Activated CD4-positive, alpha-beta memory T cell treated with anti-CD3 and anti-CD28 coated beads, Interleukin-2, amount 10 ng/mL, durations not matched to agents 7 days and 5 days (primary cell): ENCODE measurements at regions of chr1 and their contacts with region 1.

Region 1: GRCh38 chr1:41739061-41739955 is 179.4 kb downstream of the HIVEP3 start:
- DNase-seq: peak; percentile 82
- H3K4me3 Mint-ChIP-seq: peak overlapping the region; percentile 68
- H3K27ac Mint-ChIP-seq: peak overlapping the region; percentile 93
- H3K4me1 Mint-ChIP-seq: peaks cover 77% of the 10 kb centered on the region
- H3K27me3 Mint-ChIP-seq: no peaks in the 10 kb centered on the region

Region 2: GRCh38 chr1:41662061-41662764 is 77.1 kb before region 1 on chr1:
- CTCF ChIA-PET with region 1: no interaction called
- POLR2A ChIA-PET with region 1: interaction called, 11 read pairs
- DNase-seq: peak; percentile 84
- H3K4me3 Mint-ChIP-seq: peak overlapping the region; percentile 66
- H3K27ac Mint-ChIP-seq: peak overlapping the region; percentile 74
- H3K4me1 Mint-ChIP-seq: peaks cover 83% of the 10 kb centered on the region
- H3K27me3 Mint-ChIP-seq: no peaks in the 10 kb centered on the region

Region 3: GRCh38 chr1:41683681-41684500 is 55.4 kb before region 1 on chr1:
- CTCF ChIA-PET with region 1: no interaction called
- POLR2A ChIA-PET with region 1: interaction called, 15 read pairs
- DNase-seq: peak; percentile 71
- H3K4me3 Mint-ChIP-seq: peak overlapping the region; percentile 11
- H3K27ac Mint-ChIP-seq: peak overlapping the region; percentile 87
- H3K4me1 Mint-ChIP-seq: peaks cover 98% of the 10 kb centered on the region
- H3K27me3 Mint-ChIP-seq: no peaks in the 10 kb centered on the region

Region 4: GRCh38 chr1:41704196-41704595 is 35.1 kb before region 1 on chr1:
- CTCF ChIA-PET with region 1: no interaction called
- POLR2A ChIA-PET with region 1: no interaction called
- DNase-seq: no peak
- H3K4me3 Mint-ChIP-seq: no peak overlapping the region
- H3K27ac Mint-ChIP-seq: no peak overlapping the region
- H3K4me1 Mint-ChIP-seq: peaks cover 16% of the 10 kb centered on the region
- H3K27me3 Mint-ChIP-seq: no peaks in the 10 kb centered on the region

Region 5: DNA sequence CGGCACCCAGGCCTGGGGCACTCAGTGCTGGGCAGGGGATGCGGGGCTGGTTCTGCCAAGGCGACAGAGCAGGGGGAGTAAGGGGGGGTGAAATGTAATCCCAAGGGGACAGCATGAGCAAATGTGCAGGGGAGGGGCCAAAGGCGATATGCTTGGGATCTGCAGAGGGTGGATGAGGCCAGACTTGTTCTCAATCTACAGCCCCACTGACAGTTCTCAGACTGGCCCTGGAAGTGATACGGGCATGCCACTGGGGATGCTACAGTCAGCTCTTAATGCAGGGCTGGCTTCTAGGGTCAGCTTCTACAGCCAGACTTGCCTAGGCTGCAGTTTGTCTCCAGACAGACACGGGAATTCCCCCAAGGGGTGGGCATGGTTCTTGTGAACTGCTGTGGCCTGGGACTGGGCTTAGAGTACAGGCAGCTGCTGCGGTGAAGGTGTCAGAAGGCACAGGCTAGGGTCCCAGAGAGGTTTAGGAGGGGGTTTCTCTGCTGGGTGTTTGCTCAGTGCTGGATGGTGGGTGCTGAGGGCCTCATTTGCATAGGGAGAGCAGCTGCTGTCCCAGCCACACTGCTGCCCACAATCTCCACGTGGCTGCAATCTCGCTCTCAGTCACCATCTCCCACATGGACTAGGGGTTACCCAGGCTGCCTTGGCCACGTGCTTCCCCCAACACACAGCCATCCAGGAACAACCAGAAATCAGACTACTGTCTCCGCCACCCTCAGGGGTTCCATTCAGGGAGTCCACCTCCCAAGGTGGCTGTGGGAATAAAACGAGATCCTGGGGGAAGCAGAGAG is 10.7 kb before region 1 on chr1:
- CTCF ChIA-PET with region 1: interaction called, 9 read pairs
- POLR2A ChIA-PET with region 1: interaction called, 18 read pairs
- DNase-seq: peak; percentile 62
- H3K4me3 Mint-ChIP-seq: no peak overlapping the region
- H3K27ac Mint-ChIP-seq: no peak overlapping the region
- H3K4me1 Mint-ChIP-seq: peaks cover 42% of the 10 kb centered on the region
- H3K27me3 Mint-ChIP-seq: no peaks in the 10 kb centered on the region

Region 6: GRCh38 chr1:41751804-41752513 is 12.7 kb after region 1 on chr1:
- CTCF ChIA-PET with region 1: interaction called, 7 read pairs
- POLR2A ChIA-PET with region 1: interaction called, 18 read pairs
- DNase-seq: no peak
- H3K4me3 Mint-ChIP-seq: no peak overlapping the region
- H3K27ac Mint-ChIP-seq: peak overlapping the region; percentile 92
- H3K4me1 Mint-ChIP-seq: peaks cover 72% of the 10 kb centered on the region
- H3K27me3 Mint-ChIP-seq: no peaks in the 10 kb centered on the region

Region 7: GRCh38 chr1:41802532-41803501 is 63.5 kb after region 1 on chr1:
- CTCF ChIA-PET with region 1: interaction called, 3 read pairs
- POLR2A ChIA-PET with region 1: interaction called, 12 read pairs
- DNase-seq: peak; percentile 61
- H3K4me3 Mint-ChIP-seq: peak overlapping the region; percentile 33
- H3K27ac Mint-ChIP-seq: peak overlapping the region; percentile 89
- H3K4me1 Mint-ChIP-seq: peaks cover 91% of the 10 kb centered on the region
- H3K27me3 Mint-ChIP-seq: no peaks in the 10 kb centered on the region

Region 8: GRCh38 chr1:42700006-42700405 is 960.7 kb after region 1 on chr1:
- CTCF ChIA-PET with region 1: no interaction called
- POLR2A ChIA-PET with region 1: no interaction called
- DNase-seq: no peak
- H3K4me3 Mint-ChIP-seq: no peak overlapping the region
- H3K27ac Mint-ChIP-seq: no peak overlapping the region
- H3K4me1 Mint-ChIP-seq: peaks cover 4% of the 10 kb centered on the region
- H3K27me3 Mint-ChIP-seq: no peaks in the 10 kb centered on the region